ENCODE measurements at regions of chr4 and their contacts with region 1.

Region 1: DNA sequence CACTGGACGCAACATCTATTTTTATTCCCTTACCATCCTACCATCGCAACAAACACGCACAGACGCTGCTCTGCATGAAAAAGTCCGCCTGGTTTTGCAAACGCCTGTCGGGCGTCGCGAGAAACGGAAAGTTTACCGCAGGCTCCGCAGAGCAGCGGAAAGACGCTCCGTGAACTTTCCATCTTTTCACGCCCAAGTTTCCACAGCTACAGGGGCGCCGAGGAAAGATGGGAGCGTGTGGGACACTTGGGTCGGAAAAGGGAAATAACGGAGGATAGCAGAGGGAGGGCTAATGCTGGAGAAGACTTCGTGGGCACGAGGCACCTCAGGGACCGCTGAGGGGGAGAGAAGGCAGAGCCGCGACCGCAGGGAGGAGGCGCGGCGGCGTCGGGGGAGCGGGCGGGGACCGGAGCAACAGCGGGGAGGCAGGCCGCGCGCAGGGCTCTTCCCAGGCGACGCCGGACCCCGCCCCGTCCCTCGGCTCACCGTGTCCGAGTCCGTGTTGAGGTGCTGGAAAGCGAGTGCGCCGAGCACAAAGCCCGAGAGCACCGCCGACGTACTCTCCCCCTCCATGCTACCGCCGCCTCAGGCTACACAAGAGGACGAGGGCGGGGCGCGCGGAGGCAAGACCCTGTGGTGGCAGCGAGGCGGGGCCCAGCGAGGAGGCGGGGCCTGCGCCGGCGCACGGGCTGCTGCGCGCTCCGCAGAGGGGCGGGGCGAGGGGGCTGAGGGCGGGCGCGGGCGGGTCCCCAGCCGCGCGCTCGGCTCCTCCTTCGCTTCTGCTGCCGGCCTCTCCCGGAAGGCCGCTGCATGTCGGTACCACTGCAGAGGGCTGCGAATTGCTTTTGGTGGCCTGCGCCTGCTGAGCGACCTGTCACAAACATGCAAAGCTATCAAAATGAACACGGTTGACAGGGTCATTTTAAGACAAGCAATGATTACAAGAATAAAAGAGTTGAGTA is at the start of gene ABRAXAS1:
- DNase-seq: peak; percentile 87 to 99 (median 94)
- ATAC-seq: peak; percentile 91
- H3K4me3 ChIP-seq: peak within 1 kb of the TSS; percentile 71
- H3K4me3 Mint-ChIP-seq: peak within 1 kb of the TSS; percentile 94
- H3K27ac ChIP-seq: peak within 1 kb of the TSS; percentile 47 to 71
- H3K27ac Mint-ChIP-seq: peak within 1 kb of the TSS; percentile 92
- H3K4me1 ChIP-seq: peaks cover 17% of the 10 kb centered on the region
- H3K4me1 Mint-ChIP-seq: peaks cover 32% of the 10 kb centered on the region
- H3K27me3 ChIP-seq: no peaks in the 10 kb centered on the region
- H3K27me3 Mint-ChIP-seq: no peaks in the 10 kb centered on the region
- CTCF ChIP-seq: no peak
- total RNA-seq, gene ABRAXAS1: 19.3 to 19.5 TPM

Region 2: GRCh38 chr4:83012687-83013419 is 471.9 kb before region 1 on chr4:
- CTCF ChIA-PET with region 1: no interaction called
- POLR2A ChIA-PET with region 1: no interaction called
- intact Hi-C with region 1: loop called in 1 of 2 experiments (anchors 10 kb)
- DNase-seq: peak; percentile 94 to 99 (median 96)
- ATAC-seq: peak; percentile 85
- H3K4me3 ChIP-seq: peak overlapping the region; percentile 71
- H3K4me3 Mint-ChIP-seq: peak overlapping the region; percentile 97
- H3K27ac ChIP-seq: peak overlapping the region; percentile 33 to 49
- H3K27ac Mint-ChIP-seq: peak overlapping the region; percentile 91
- H3K4me1 ChIP-seq: peaks cover 26% of the 10 kb centered on the region
- H3K4me1 Mint-ChIP-seq: peaks cover 58% of the 10 kb centered on the region
- H3K27me3 ChIP-seq: no peaks in the 10 kb centered on the region
- H3K27me3 Mint-ChIP-seq: no peaks in the 10 kb centered on the region
- CTCF ChIP-seq: peak; percentile 56

Region 3: GRCh38 chr4:83535520-83536361 is 51.0 kb after region 1 on chr4 and contains the start of gene GPAT3:
- CTCF ChIA-PET with region 1: no interaction called
- POLR2A ChIA-PET with region 1: interaction called, 15 read pairs
- intact Hi-C with region 1: no loop called
- DNase-seq: peak; percentile 33 to 82 (median 58)
- ATAC-seq: peak; percentile 79
- H3K4me3 ChIP-seq: peak within 1 kb of the TSS; percentile 71
- H3K4me3 Mint-ChIP-seq: peak within 1 kb of the TSS; percentile 93
- H3K27ac ChIP-seq: peak within 1 kb of the TSS in 1 of 2 donors; percentile 1
- H3K27ac Mint-ChIP-seq: peak within 1 kb of the TSS; percentile 81
- H3K4me1 ChIP-seq: peaks cover 21% of the 10 kb centered on the region
- H3K4me1 Mint-ChIP-seq: peaks cover 39% of the 10 kb centered on the region
- H3K27me3 ChIP-seq: no peaks in the 10 kb centered on the region
- H3K27me3 Mint-ChIP-seq: peaks cover 34% of the 10 kb centered on the region
- CTCF ChIP-seq: no peak
- total RNA-seq, gene GPAT3: 2.9 to 4.6 TPM

Region 4: GRCh38 chr4:84582302-84583000 is 1097.7 kb after region 1 on chr4:
- CTCF ChIA-PET with region 1: interaction called, 4 read pairs
- POLR2A ChIA-PET with region 1: no interaction called
- intact Hi-C with region 1: loop called in 1 of 2 experiments (anchors 5 kb)
- DNase-seq: peak; percentile 76 to 97 (median 92)
- ATAC-seq: peak; percentile 80
- H3K4me3 ChIP-seq: peak overlapping the region; percentile 56
- H3K4me3 Mint-ChIP-seq: peak overlapping the region; percentile 68
- H3K27ac ChIP-seq: no peak overlapping the region
- H3K27ac Mint-ChIP-seq: peak overlapping the region; percentile 8
- H3K4me1 ChIP-seq: peaks cover 17% of the 10 kb centered on the region
- H3K4me1 Mint-ChIP-seq: peaks cover 15% of the 10 kb centered on the region
- H3K27me3 ChIP-seq: peaks cover 9 to 10% of the 10 kb centered on the region in 2 experiments
- H3K27me3 Mint-ChIP-seq: peaks cover 38% of the 10 kb centered on the region
- CTCF ChIP-seq: no peak